Heart right ventricle (tissue), 16 donors: ENCODE measurements at regions of chr4 and their contacts with region 1.

Region 1: GRCh38 chr4:101347557-101348366 is 436 bp upstream of the PPP3CA start:
- DNase-seq: peak; percentile 99 to 100
- ATAC-seq: peak; percentile 92 to 98 (median 97)
- H3K4me3 ChIP-seq: peak overlapping the region; percentile 81 to 95 (median 92)
- H3K27ac ChIP-seq: peak overlapping the region; percentile 91 to 99 (median 96)
- H3K4me1 ChIP-seq: peaks cover 0 to 41% (median 26%) of the 10 kb centered on the region in 9 donors
- H3K27me3 ChIP-seq: no peaks in the 10 kb centered on the region
- CTCF ChIP-seq: peak in 2 of 9 donors; percentile 12 to 26

Region 2: DNA sequence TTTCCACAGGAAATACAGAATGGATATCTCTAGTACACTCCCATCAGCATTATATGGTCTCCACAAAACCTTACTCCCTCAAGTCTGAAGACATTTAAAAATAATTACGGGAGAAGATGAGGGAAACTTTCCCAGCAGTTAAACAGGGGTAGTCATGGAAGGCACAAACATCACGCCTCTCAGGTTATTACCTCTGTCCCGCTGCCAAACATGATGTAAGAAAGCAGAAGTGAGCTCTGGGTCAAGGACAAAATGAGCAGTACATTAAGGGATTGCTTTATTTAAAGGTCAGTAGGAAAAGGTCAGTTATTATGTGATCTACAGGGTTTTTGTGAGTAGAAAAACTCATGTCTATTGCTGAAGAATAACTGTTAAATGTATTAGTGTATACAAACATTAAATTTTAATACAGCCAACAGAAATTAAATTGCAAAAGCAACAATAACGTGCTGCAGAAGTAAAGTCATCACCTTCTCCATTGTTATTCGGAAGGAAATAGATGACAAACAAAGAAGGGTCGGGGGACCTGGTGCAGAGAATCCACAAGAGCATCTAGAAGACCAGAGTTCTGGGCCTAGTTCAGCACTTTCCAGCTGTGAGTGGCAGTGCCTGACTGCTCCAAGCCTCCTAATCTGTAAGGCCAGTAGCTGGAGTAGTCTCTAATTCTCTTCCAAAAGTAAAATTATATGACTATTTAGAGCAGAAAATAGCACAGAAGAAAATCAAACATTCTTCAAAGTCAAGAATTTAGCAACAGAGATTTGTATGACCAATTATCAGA is 171.7 kb before region 1 on chr4:
- intact Hi-C with region 1: loop called in 5 of 10 experiments (anchors 5 to 10 kb)
- DNase-seq: peak in 1 of 2 donors; percentile 38
- ATAC-seq: peak; percentile 71 to 92 (median 88)
- H3K4me3 ChIP-seq: no peak overlapping the region
- H3K27ac ChIP-seq: peak overlapping the region in 5 of 10 donors; percentile 4 to 72 (median 37)
- H3K4me1 ChIP-seq: peaks cover 0 to 46% (median 24%) of the 10 kb centered on the region in 9 donors
- H3K27me3 ChIP-seq: no peaks in the 10 kb centered on the region
- CTCF ChIP-seq: no peak

Region 3: DNA sequence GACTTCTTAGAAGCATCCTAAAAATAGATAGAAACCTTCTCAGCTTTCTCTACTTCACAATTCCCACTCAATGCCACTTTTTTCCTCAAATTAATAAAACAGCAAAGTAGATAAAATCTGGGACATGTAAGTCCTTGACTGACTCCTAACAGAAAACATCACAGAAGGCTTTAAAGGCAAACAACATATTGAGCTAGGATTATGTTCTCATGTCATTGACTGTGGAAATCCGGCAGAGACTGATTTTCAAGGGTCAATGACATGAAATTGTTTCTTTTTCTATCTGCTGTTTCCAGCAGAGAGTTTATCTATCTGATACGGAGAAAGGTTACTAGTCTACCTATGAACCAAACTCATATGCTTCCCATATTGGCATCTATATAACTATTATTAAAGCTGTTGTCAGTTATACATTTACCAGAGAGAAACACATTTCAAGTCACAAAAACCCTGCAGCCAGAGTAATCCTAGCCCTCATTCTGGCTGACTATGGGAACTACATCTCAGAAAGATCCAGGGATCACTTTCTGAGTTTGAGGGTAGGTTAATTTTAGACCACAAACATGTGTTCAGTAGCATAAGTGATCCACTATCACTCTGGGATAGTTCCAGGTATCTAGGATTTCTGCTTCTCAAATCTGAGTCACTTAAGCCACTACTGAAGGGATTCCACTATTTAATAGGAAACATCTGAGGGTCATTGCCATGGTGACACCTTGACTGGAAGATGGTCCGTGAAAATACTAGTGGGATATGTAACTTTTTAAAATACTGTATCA is 148.1 kb before region 1 on chr4:
- intact Hi-C with region 1: loop called in 5 of 10 experiments (anchors 5 to 10 kb)
- DNase-seq: no peak
- ATAC-seq: peak in 6 of 8 donors; percentile 44 to 72 (median 63)
- H3K4me3 ChIP-seq: no peak overlapping the region
- H3K27ac ChIP-seq: peak overlapping the region in 2 of 10 donors; percentile 16 to 75
- H3K4me1 ChIP-seq: peaks cover 0 to 39% (median 23%) of the 10 kb centered on the region in 9 donors
- H3K27me3 ChIP-seq: no peaks in the 10 kb centered on the region
- CTCF ChIP-seq: no peak

Region 4: GRCh38 chr4:101288365-101289145 is 59.2 kb before region 1 on chr4:
- intact Hi-C with region 1: loop called in 5 of 10 experiments (anchors 5 to 10 kb)
- DNase-seq: peak in 1 of 2 donors; percentile 29
- ATAC-seq: peak in 5 of 8 donors; percentile 27 to 61 (median 52)
- H3K4me3 ChIP-seq: no peak overlapping the region
- H3K27ac ChIP-seq: peak overlapping the region in 2 of 10 donors; percentile 1 to 63
- H3K4me1 ChIP-seq: peaks cover 0 to 70% (median 57%) of the 10 kb centered on the region in 9 donors
- H3K27me3 ChIP-seq: no peaks in the 10 kb centered on the region
- CTCF ChIP-seq: no peak

Region 5: GRCh38 chr4:101419324-101420135 is 71.8 kb after region 1 on chr4:
- intact Hi-C with region 1: loop called in 1 of 10 experiments (anchors 5 kb)
- DNase-seq: peak in 1 of 2 donors; percentile 5
- ATAC-seq: peak in 6 of 8 donors; percentile 57 to 90 (median 80)
- H3K4me3 ChIP-seq: no peak overlapping the region
- H3K27ac ChIP-seq: peak overlapping the region in 3 of 10 donors; percentile 17 to 58 (median 18)
- H3K4me1 ChIP-seq: peaks cover 0 to 37% (median 17%) of the 10 kb centered on the region in 9 donors
- H3K27me3 ChIP-seq: no peaks in the 10 kb centered on the region
- CTCF ChIP-seq: no peak

Region 6: GRCh38 chr4:101730291-101731117 is 382.7 kb after region 1 on chr4:
- intact Hi-C with region 1: loop called in 6 of 10 experiments (anchors 5 to 10 kb)
- DNase-seq: peak; percentile 19 to 66
- ATAC-seq: peak; percentile 68 to 94 (median 80)
- H3K4me3 ChIP-seq: no peak overlapping the region
- H3K27ac ChIP-seq: no peak overlapping the region
- H3K4me1 ChIP-seq: no peaks in the 10 kb centered on the region
- H3K27me3 ChIP-seq: no peaks in the 10 kb centered on the region
- CTCF ChIP-seq: peak; percentile 38 to 80 (median 75)